ENCODE measurements at regions of chr2 and their contacts with region 1.

Region 1: DNA sequence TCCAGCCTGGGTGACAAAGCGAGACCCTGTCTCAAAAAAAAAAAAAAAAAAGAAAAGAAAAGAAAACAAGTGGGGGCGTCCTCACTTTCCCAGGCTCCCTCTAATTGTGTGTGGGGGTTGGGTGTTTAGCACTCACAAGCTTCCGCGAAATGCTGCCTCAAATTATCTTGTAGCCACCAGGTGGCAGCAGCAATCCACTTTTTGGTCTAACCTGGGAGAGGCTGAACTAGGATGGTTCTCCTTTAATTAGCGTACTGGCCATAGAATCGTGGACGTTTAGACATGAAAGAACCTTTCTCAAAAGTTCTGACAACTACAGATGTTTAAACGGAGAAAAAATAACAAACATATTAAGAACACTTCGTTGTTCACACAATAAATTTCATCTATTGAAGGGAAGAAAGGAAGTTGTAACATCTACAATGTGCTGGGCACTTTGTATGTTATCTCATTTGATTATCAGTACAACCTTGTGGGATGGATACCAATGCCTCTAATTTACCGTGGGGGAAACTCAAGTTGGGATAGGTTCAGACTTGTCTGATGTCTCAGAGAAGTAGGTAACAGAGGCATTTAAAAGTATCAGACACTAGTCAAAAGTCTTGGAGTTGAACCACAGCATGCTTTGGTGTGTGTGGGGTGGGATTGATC is 122.7 kb upstream of the NABP1 start:
- DNase-seq: peak; percentile 73
- ATAC-seq: peak; percentile 97
- H3K4me3 ChIP-seq: no peak overlapping the region
- H3K27ac ChIP-seq: no peak overlapping the region
- H3K4me1 ChIP-seq: no peaks in the 10 kb centered on the region
- H3K27me3 ChIP-seq: peaks cover 0 to 7% of the 10 kb centered on the region in 2 experiments; a peak in 2 of 5 replicates
- CTCF ChIP-seq: peak; percentile 89
- EP300 ChIP-seq: no peak
- POLR2A ChIP-seq: no peak
- RAD21 ChIP-seq: peak; percentile 79

Region 2: DNA sequence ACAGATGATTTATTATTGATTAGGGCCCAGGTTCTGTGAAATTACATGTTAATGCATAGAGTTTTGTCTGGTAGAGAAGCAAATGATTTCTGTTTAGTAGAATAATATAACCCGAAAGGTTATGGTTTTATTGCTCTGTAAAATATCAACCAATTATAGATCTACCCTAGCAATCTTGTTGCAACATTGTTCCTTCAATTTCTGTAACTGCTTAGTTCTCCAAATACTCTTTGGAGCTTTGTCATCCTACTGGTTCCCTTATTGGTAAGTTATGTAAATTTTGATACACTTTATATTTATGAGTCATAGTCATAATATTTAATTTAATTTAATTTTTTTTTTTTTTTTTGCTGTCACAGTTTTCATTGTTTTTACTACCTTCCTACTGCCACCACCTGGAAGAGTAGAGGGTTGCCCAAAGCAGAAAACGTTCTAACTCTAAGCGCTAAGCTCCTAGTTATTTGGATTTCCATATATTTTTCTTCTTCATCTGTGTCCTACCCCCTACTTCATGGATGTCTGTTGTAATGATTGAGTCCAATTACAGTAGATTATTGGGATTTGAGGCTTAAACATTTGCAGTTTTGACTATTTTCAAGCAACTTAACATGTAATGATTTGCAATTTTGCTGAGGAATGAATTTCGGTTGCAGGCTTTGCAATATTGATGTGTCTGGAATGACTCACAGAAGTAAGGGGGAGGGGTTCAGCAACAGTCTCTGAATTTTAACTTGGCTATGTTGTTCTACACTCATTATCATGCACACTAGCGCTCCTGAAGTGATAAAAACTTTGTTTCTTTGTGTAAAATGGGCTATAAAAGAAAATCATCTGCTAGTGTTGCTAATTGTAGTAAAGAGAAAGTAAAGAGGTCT is 173.8 kb after region 1 on chr2:
- CTCF ChIA-PET with region 1: no interaction called
- POLR2A ChIA-PET with region 1: no interaction called
- in situ Hi-C with region 1: no loop called
- intact Hi-C with region 1: loop called (anchors 1 kb)
- DNase-seq: no peak
- ATAC-seq: no peak; the same call in 2 of the 3 replicates
- H3K4me3 ChIP-seq: no peak overlapping the region
- H3K27ac ChIP-seq: no peak overlapping the region
- H3K4me1 ChIP-seq: no peaks in the 10 kb centered on the region
- H3K27me3 ChIP-seq: no peaks in the 10 kb centered on the region
- CTCF ChIP-seq: no peak
- EP300 ChIP-seq: no peak
- POLR2A ChIP-seq: no peak
- RAD21 ChIP-seq: no peak

Region 3: DNA sequence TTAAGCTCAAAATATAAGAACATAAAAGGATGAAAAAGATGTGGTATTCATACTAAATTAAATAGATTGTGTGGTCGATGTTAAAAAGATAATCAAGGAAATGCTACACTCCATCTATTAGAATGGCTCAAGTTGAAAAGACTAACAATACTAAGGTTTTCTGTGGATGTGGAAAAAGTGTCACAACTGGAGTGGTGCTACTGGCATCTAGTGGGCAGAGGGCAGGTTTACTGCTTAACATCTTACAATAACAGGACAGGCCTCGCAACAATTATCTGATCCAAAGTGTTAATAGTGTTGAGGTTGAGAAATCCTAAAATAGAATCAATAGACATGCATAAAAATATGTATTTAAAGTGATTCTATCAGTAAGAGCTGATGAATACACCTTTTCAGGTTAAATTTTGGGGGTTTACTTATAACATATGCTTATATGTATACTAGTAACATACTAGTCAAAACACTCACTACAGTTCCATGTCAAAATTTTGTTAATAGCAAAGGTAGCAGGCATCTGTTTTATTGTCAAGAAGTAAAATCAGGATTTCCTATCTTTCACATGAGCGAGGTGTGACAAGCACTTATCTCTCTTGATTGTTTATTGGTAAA is 731.0 kb after region 1 on chr2:
- CTCF ChIA-PET with region 1: no interaction called
- POLR2A ChIA-PET with region 1: no interaction called
- in situ Hi-C with region 1: no loop called
- intact Hi-C with region 1: loop called (anchors 2 kb)
- DNase-seq: peak; percentile 35
- ATAC-seq: peak; percentile 83
- H3K4me3 ChIP-seq: no peak overlapping the region
- H3K27ac ChIP-seq: no peak overlapping the region
- H3K4me1 ChIP-seq: no peaks in the 10 kb centered on the region
- H3K27me3 ChIP-seq: no peaks in the 10 kb centered on the region
- CTCF ChIP-seq: peak; percentile 49
- EP300 ChIP-seq: no peak
- POLR2A ChIP-seq: no peak
- RAD21 ChIP-seq: no peak

Measured in HepG2 (cell line).